ENCODE measurements at regions of chr11 and their contacts with region 1.

Region 1: GRCh38 chr11:134139873-134140331 is 71.0 kb downstream of the JAM3 start:
- DNase-seq: peak; percentile 86
- H3K4me3 ChIP-seq: no peak overlapping the region
- H3K27ac ChIP-seq: no peak overlapping the region
- H3K4me1 ChIP-seq: peaks cover 2% of the 10 kb centered on the region; the same call in 1 of the 2 replicates
- H3K27me3 ChIP-seq: no peaks in the 10 kb centered on the region

Region 2: GRCh38 chr11:133927690-133928627 is 211.9 kb before region 1 on chr11:
- in situ Hi-C with region 1: loop called (anchors 10 kb)
- DNase-seq: peak; percentile 84
- H3K4me3 ChIP-seq: peak overlapping the region; percentile 52
- H3K27ac ChIP-seq: no peak overlapping the region
- H3K4me1 ChIP-seq: no peaks in the 10 kb centered on the region
- H3K27me3 ChIP-seq: 0 out of 2 replicates have a peak, but pooled peaks cover 4% of the 10 kb centered on the region

Region 3: GRCh38 chr11:133956650-133957633 is 183.0 kb before region 1 on chr11 and contains the start of gene IGSF9B:
- in situ Hi-C with region 1: loop called (anchors 10 kb)
- DNase-seq: peak; percentile 83
- H3K4me3 ChIP-seq: peak within 1 kb of the TSS; percentile 62
- H3K27ac ChIP-seq: no peak within 1 kb of the TSS
- H3K4me1 ChIP-seq: no peaks in the 10 kb centered on the region
- H3K27me3 ChIP-seq: peaks cover 40% of the 10 kb centered on the region
- total RNA-seq, gene IGSF9B: 0.51 TPM in 1 of 2 replicates, not detected in the other

Region 4: GRCh38 chr11:134050541-134051383 is 89.1 kb before region 1 on chr11:
- in situ Hi-C with region 1: loop called (anchors 5 kb)
- DNase-seq: peak; percentile 80
- H3K4me3 ChIP-seq: peak overlapping the region; percentile 52
- H3K27ac ChIP-seq: no peak overlapping the region
- H3K4me1 ChIP-seq: peaks cover 14% of the 10 kb centered on the region
- H3K27me3 ChIP-seq: no peaks in the 10 kb centered on the region

Region 5: DNA sequence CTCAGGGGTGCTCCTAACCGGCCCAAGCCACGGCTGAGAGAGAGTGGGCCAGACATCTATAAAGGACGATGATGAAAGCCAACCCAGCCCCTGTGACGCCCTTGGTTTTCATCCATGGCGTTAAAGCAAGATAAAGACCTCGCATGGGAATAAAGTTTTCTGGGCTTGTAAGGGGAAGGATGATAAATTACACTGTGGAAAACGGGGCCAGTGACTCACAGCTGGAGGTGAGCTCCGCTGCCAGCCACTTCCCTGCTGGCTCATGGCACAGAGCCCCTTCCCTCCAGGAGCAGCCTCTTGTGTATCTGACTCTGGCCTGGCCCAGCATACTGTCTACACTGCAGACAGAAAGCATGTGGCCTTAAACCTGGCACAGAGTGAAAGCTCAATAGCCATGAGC is 775.3 kb after region 1 on chr11:
- in situ Hi-C with region 1: no loop called
- DNase-seq: peak; percentile 1
- H3K4me3 ChIP-seq: no peak overlapping the region
- H3K27ac ChIP-seq: no peak overlapping the region
- H3K4me1 ChIP-seq: no peaks in the 10 kb centered on the region
- H3K27me3 ChIP-seq: no peaks in the 10 kb centered on the region; the same call in 1 of the 2 replicates

Measured in GM23248 (cell line).